Spleen (tissue), 13 donors: ENCODE measurements at regions of chr20 and their contacts with region 1.

Region 1: GRCh38 chr20:21995461-21995860 is 290.0 kb downstream of the PAX1 start:
- DNase-seq: no peak
- H3K4me3 ChIP-seq: no peak overlapping the region
- H3K27ac ChIP-seq: no peak overlapping the region
- H3K4me1 ChIP-seq: no peaks in the 10 kb centered on the region
- H3K27me3 ChIP-seq: no peaks in the 10 kb centered on the region
- CTCF ChIP-seq: no peak
- POLR2A ChIP-seq: no peak

Region 2: GRCh38 chr20:21936720-21937380 is 58.6 kb before region 1 on chr20:
- intact Hi-C with region 1: loop called (anchors 10 kb)
- DNase-seq: no peak
- H3K4me3 ChIP-seq: no peak overlapping the region
- H3K27ac ChIP-seq: no peak overlapping the region
- H3K4me1 ChIP-seq: no peaks in the 10 kb centered on the region
- H3K27me3 ChIP-seq: no peaks in the 10 kb centered on the region
- CTCF ChIP-seq: no peak
- POLR2A ChIP-seq: no peak

Region 3: GRCh38 chr20:22403632-22404361 is 408.3 kb after region 1 on chr20:
- intact Hi-C with region 1: no loop called
- DNase-seq: no peak
- H3K4me3 ChIP-seq: peak overlapping the region in 7 of 8 donors; percentile 10 to 59 (median 27)
- H3K27ac ChIP-seq: peak overlapping the region in 2 of 8 donors; percentile 30 to 38
- H3K4me1 ChIP-seq: peaks cover 0 to 17% (median 4%) of the 10 kb centered on the region in 6 donors
- H3K27me3 ChIP-seq: peaks cover 0 to 4% (median 0%) of the 10 kb centered on the region in 7 donors
- CTCF ChIP-seq: no peak
- POLR2A ChIP-seq: no peak